ENCODE measurements at regions of chr17 and their contacts with region 1.

Region 1: DNA sequence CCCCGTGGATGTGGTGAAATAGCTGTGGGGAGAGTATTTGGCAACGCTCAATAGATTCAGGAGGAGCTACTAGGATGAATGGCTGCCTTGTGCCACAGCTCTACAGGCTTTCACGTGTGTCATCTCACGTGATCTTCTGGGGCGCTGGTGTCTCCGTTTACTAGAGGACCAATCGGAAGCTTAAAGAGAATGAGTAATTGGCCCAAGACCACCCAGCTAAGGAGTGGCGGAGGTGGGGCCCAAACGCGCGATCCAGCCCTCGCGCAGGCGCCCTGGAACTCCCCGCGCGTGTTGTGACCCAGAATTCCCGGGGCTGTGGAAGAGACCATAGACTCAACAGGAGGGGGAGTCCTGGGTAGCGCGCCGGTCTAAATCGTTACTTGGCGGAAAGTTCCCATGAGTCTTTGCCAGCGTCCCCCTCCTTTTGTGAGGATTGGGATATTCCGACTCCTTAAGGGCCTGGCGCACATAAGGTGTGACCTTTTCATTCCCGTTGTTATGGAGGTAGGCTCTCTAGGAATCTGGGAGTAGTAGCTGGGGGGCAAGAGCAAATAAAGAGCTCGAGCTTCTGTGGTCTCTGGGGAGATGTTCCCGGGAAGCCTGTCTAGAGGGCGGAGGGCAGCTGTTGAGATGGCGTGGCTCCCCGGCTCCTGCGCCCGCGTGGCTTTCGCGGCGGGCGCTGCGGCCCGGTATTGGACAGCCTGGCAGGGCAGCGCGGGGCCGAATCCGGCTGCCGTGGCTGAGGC is 23.4 kb downstream of the TRPV2 start:
- DNase-seq: peak; percentile 86
- ATAC-seq: peak; percentile 88
- H3K4me3 Mint-ChIP-seq: peak overlapping the region; percentile 99
- H3K27ac Mint-ChIP-seq: peak overlapping the region; percentile 98
- H3K4me1 Mint-ChIP-seq: peaks cover 40% of the 10 kb centered on the region
- H3K27me3 Mint-ChIP-seq: no peaks in the 10 kb centered on the region
- CTCF ChIP-seq: no peak

Region 2: DNA sequence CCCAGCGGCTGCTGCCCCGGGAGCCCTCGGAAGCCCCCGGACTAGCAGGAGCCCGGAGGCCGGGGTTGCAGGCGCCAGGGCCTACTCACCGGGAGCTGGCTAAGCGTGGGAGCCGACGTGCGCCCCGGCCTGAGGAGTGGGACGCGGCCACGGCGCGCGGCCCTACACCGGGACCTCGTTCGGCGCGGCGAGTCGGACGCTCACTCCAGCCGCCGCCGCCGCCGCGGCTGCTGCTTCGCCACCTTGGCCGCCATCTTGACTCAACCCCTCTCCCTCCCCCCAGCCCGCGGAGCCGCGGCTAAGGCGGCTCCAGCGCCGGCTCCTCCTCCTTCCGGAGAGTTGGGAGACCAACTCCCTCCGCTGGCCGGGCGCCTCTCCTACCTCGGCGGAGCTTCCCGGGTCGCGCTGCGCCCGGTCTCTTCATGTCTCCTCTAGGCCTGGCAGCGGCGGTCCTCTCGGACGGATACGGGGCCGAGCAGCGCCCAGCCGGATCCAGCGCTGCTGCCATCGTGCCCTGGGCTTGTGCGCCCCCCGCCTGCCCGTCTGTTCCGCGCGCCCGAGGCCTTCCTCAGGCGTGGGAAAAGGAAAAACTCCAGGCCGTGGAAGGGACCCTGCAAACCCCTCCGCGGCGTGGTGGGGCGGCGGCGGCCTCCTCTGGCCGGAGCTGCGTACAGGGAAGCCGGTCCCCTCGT is 223.3 kb before region 1 on chr17 and contains the start of gene NCOR1:
- CTCF ChIA-PET with region 1: no interaction called
- POLR2A ChIA-PET with region 1: interaction called, 23 read pairs
- intact Hi-C with region 1: no loop called
- DNase-seq: peak; percentile 83
- ATAC-seq: peak; percentile 86
- H3K4me3 Mint-ChIP-seq: peak within 1 kb of the TSS; percentile 98
- H3K27ac Mint-ChIP-seq: peak within 1 kb of the TSS; percentile 86
- H3K4me1 Mint-ChIP-seq: peaks cover 50% of the 10 kb centered on the region
- H3K27me3 Mint-ChIP-seq: no peaks in the 10 kb centered on the region
- CTCF ChIP-seq: no peak
- total RNA-seq, gene NCOR1: 163 and 188 TPM in 2 replicates

Region 3: GRCh38 chr17:16363749-16364536 is 74.8 kb before region 1 on chr17:
- CTCF ChIA-PET with region 1: interaction called, 10 read pairs
- POLR2A ChIA-PET with region 1: interaction called, 6 read pairs
- intact Hi-C with region 1: no loop called
- DNase-seq: peak; percentile 56
- ATAC-seq: peak; percentile 97
- H3K4me3 Mint-ChIP-seq: no peak overlapping the region
- H3K27ac Mint-ChIP-seq: no peak overlapping the region
- H3K4me1 Mint-ChIP-seq: peaks cover 4% of the 10 kb centered on the region
- H3K27me3 Mint-ChIP-seq: no peaks in the 10 kb centered on the region
- CTCF ChIP-seq: peak; percentile 95

Region 4: GRCh38 chr17:16428098-16428882 is 10.4 kb before region 1 on chr17:
- CTCF ChIA-PET with region 1: interaction called, 7 read pairs
- POLR2A ChIA-PET with region 1: interaction called, 25 read pairs
- intact Hi-C with region 1: loop called (anchors 1 kb)
- DNase-seq: no peak
- ATAC-seq: peak; percentile 89
- H3K4me3 Mint-ChIP-seq: no peak overlapping the region
- H3K27ac Mint-ChIP-seq: peak overlapping the region; percentile 30
- H3K4me1 Mint-ChIP-seq: no peaks in the 10 kb centered on the region
- H3K27me3 Mint-ChIP-seq: no peaks in the 10 kb centered on the region
- CTCF ChIP-seq: no peak

Region 5: GRCh38 chr17:16537130-16537458 is 98.4 kb after region 1 on chr17:
- CTCF ChIA-PET with region 1: no interaction called
- POLR2A ChIA-PET with region 1: interaction called, 24 read pairs
- intact Hi-C with region 1: loop called (anchors 1 kb)
- DNase-seq: no peak
- ATAC-seq: no peak
- H3K4me3 Mint-ChIP-seq: peak overlapping the region; percentile 98
- H3K27ac Mint-ChIP-seq: peak overlapping the region; percentile 99
- H3K4me1 Mint-ChIP-seq: peaks cover 21% of the 10 kb centered on the region
- H3K27me3 Mint-ChIP-seq: no peaks in the 10 kb centered on the region
- CTCF ChIP-seq: no peak

Region 6: GRCh38 chr17:16987830-16988601 is 549.3 kb after region 1 on chr17:
- CTCF ChIA-PET with region 1: no interaction called
- POLR2A ChIA-PET with region 1: interaction called, 5 read pairs
- intact Hi-C with region 1: loop called (anchors 10 kb)
- DNase-seq: peak; percentile 78
- ATAC-seq: peak; percentile 80
- H3K4me3 Mint-ChIP-seq: peak overlapping the region; percentile 84
- H3K27ac Mint-ChIP-seq: peak overlapping the region; percentile 97
- H3K4me1 Mint-ChIP-seq: peaks cover 78% of the 10 kb centered on the region
- H3K27me3 Mint-ChIP-seq: no peaks in the 10 kb centered on the region
- CTCF ChIP-seq: no peak